ENCODE measurements at regions of chr20 and their contacts with region 1.

Region 1: DNA sequence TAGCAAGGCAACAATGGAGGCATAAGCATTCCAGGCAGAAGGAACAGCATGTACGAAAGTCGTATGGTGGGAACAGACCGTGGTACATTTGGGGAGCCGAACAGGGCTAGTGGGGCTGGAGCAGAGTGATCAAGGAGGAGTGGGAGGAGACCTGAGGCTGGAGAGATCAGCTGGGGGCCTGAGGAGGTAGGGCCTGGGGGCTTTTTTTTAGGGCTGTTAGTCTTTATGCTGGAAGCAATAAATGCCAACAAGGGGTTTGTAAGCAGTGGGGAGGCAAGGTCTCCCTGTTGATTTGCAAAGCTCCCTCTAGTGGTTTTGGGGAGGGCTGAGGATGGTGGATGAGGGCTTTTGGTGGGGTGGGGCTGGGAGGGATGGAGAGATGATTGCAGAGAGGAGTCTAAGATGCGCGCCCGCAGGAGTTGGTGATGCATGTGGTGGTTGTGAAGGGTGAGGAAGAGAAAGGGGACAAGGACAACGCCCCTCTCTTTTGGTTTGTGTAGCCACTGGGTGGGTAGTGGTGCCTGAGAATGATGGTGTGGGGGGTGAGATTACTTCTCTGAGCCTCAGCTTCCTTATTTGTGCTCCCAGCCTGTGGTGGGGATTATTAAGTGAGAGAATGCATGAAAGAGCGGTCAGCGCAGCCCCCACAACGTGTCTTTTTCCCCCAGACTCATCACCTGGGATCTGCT is 74.1 kb upstream of the TOX2 start:
- DNase-seq: no peak
- ATAC-seq: no peak
- H3K4me3 ChIP-seq: no peak overlapping the region
- H3K27ac ChIP-seq: no peak overlapping the region
- H3K4me1 ChIP-seq: peaks cover 0 to 9% (median 0%) of the 10 kb centered on the region in 12 donors
- H3K27me3 ChIP-seq: peaks cover 0 to 9% (median 0%) of the 10 kb centered on the region in 9 donors
- CTCF ChIP-seq: peak in 9 of 12 donors; percentile 17 to 32 (median 19)
- POLR2A ChIP-seq: no peak

Region 2: GRCh38 chr20:43767686-43768474 is 72.6 kb before region 1 on chr20:
- intact Hi-C with region 1: loop called in 1 of 10 experiments (anchors 5 kb)
- DNase-seq: peak in 1 of 5 donors; percentile 37
- ATAC-seq: peak; percentile 40 to 67 (median 64)
- H3K4me3 ChIP-seq: no peak overlapping the region
- H3K27ac ChIP-seq: no peak overlapping the region
- H3K4me1 ChIP-seq: peaks cover 0 to 18% (median 0%) of the 10 kb centered on the region in 12 donors
- H3K27me3 ChIP-seq: peaks cover 0 to 20% (median 2%) of the 10 kb centered on the region in 9 donors
- CTCF ChIP-seq: no peak
- POLR2A ChIP-seq: no peak

Region 3: DNA sequence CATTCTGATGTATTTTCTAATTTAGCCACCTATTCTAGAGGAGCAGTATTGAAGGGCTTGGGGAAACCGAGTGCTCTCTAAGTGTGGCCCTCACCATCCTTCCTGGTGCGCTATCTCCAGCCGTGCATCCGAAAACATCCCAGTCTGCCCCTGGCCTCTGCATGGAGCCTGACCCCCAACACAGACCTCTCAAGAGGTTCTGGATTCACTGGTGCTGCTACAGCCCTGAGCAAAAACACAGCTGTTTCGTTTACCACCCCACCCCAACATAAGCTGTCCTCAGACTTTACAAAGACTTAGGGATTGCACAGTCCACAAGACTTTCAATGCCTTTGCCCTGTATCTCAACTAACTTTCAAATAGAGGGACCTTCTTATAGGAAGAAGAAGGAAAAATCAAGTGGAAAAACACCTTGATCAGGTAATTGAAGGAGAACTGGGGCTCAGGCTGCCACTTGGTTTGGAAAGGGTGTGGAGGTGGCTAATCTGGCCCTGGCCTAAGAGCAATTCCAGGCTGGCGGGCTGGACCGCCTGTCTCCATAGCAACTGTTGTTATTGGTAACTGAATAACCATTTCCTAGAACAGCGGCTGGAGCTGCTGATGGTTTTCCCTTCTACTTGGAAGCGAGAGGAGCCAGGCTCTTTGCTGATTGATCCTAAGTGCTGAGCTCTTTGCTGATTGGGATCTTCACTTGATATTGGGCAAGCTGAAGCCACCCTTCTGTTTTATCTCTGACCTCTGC is 16.0 kb before region 1 on chr20:
- intact Hi-C with region 1: no loop called
- DNase-seq: no peak
- ATAC-seq: peak; percentile 38 to 83 (median 59)
- H3K4me3 ChIP-seq: no peak overlapping the region
- H3K27ac ChIP-seq: no peak overlapping the region
- H3K4me1 ChIP-seq: no peaks in the 10 kb centered on the region
- H3K27me3 ChIP-seq: peaks cover 0 to 15% (median 0%) of the 10 kb centered on the region in 9 donors
- CTCF ChIP-seq: no peak
- POLR2A ChIP-seq: no peak

Measured in heart left ventricle (tissue), 16 donors.